Naive thymus-derived CD4-positive, alpha-beta T cell (primary cell): ENCODE measurements at regions of chr5 and their contacts with region 1.

Region 1: DNA sequence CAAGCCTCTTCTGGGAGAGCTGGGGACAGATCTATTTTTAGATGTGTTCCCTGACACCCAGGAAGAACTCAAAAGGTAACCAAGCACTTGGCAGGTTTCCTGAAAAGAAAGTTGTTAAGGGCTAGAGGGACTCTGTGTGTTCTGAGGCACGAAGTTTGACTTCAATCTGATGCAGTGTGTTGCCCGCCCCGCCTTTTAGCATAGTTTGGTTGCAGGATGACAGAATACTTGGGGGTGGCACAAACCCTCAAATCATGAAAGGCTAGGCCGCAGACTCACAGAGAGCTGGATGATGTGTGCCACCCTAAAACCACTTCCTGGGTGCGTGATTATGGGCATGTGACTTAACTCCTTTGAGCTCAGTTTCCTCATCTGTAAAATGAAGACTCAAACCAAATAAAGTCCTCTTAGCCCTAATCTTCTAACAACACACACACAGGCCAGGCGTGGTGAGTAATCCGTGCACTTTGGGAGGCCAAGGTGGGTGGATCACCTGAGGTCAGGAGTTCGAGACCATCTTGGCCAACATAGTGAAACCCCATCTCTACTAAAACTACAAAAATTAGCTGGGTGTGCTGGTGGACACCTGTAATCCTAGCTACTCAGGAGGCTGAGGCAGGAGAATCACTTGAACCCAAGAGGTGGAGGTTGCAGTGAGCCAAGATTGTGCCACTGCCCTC is 12.8 kb upstream of the NDFIP1 start:
- DNase-seq: peak; percentile 33 to 96 (median 92)
- ATAC-seq: peak; percentile 97
- H3K4me3 ChIP-seq: peak overlapping the region; percentile 3
- H3K4me3 Mint-ChIP-seq: peak overlapping the region; percentile 49 to 85 (median 70)
- H3K27ac ChIP-seq: peak overlapping the region; percentile 88
- H3K27ac Mint-ChIP-seq: peak overlapping the region; percentile 79 to 100 (median 96)
- H3K4me1 ChIP-seq: peaks cover 22 to 66% of the 10 kb centered on the region in 2 donors
- H3K4me1 Mint-ChIP-seq: peaks cover 25 to 97% (median 80%) of the 10 kb centered on the region in 7 donors
- H3K27me3 ChIP-seq: no peaks in the 10 kb centered on the region
- H3K27me3 Mint-ChIP-seq: no peaks in the 10 kb centered on the region

Region 2: DNA sequence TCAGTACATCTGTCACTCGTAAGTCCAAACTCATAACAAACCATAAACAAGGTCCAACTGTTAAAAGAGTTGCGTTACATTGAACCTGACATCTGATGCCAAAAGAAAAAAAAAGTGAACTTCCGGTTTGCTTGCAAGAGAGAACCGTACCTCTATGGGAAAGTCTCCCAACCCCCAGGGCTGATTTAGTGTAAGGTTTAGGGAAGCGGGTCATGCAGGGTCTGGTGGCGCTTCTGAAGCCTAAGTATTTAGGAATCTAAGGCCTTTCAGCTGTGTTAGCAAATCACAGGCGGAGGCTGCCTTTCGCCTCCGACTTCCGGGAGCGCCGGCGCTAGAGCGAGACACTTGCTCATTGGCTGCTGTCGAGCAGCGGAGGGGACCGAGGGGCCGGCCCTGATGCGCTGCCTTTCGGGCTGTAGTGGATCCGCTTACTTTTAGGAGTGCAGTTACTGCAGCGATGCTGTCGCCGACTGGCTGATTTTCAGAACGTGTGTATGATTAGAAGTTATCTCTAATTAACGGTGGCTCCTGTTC is 71.0 kb before region 1 on chr5:
- CTCF ChIA-PET with region 1: no interaction called
- POLR2A ChIA-PET with region 1: interaction called, 15 read pairs
- intact Hi-C with region 1: loop called in 1 of 2 experiments (anchors 1 kb)
- DNase-seq: peak; percentile 61 to 85 (median 82)
- ATAC-seq: peak; percentile 100
- H3K4me3 ChIP-seq: peak overlapping the region; percentile 62
- H3K4me3 Mint-ChIP-seq: peak overlapping the region; percentile 81 to 97 (median 92)
- H3K27ac ChIP-seq: peak overlapping the region; percentile 79
- H3K27ac Mint-ChIP-seq: peak overlapping the region; percentile 96 to 100 (median 98)
- H3K4me1 ChIP-seq: peaks cover 4 to 11% of the 10 kb centered on the region in 2 donors
- H3K4me1 Mint-ChIP-seq: peaks cover 5 to 20% (median 18%) of the 10 kb centered on the region in 7 donors
- H3K27me3 ChIP-seq: no peaks in the 10 kb centered on the region
- H3K27me3 Mint-ChIP-seq: no peaks in the 10 kb centered on the region

Region 3: GRCh38 chr5:142032747-142033631 is 62.8 kb before region 1 on chr5:
- CTCF ChIA-PET with region 1: interaction called, 4 read pairs
- POLR2A ChIA-PET with region 1: interaction called, 9 read pairs
- intact Hi-C with region 1: loop called in 1 of 2 experiments (anchors 2 kb)
- DNase-seq: no peak
- ATAC-seq: no peak
- H3K4me3 ChIP-seq: no peak overlapping the region
- H3K4me3 Mint-ChIP-seq: peak overlapping the region in 1 of 10 donors; percentile 43
- H3K27ac ChIP-seq: no peak overlapping the region
- H3K27ac Mint-ChIP-seq: peak overlapping the region in 6 of 9 donors; percentile 13 to 83 (median 69)
- H3K4me1 ChIP-seq: peaks cover 0 to 20% of the 10 kb centered on the region in 2 donors
- H3K4me1 Mint-ChIP-seq: peaks cover 8 to 32% (median 20%) of the 10 kb centered on the region in 7 donors
- H3K27me3 ChIP-seq: no peaks in the 10 kb centered on the region
- H3K27me3 Mint-ChIP-seq: no peaks in the 10 kb centered on the region